Esophagus muscularis mucosa (tissue), 4 donors: ENCODE measurements at regions of chr5 and their contacts with region 1.

Region 1: GRCh38 chr5:75336625-75337339 is at the start of gene HMGCR:
- DNase-seq: peak; percentile 100
- H3K4me3 ChIP-seq: peak within 1 kb of the TSS; percentile 96 to 100 (median 96)
- H3K27ac ChIP-seq: peak within 1 kb of the TSS; percentile 91 to 97 (median 96)
- H3K4me1 ChIP-seq: peaks cover 13 to 23% (median 19%) of the 10 kb centered on the region in 4 donors
- H3K27me3 ChIP-seq: no peaks in the 10 kb centered on the region
- CTCF ChIP-seq: peak in 1 of 3 experiments; percentile 6
- EP300 ChIP-seq: no peak
- POLR2A ChIP-seq: no peak
- total RNA-seq, gene HMGCR: 9.6 to 17.4 (median 12.6) TPM

Region 2: GRCh38 chr5:75236322-75237316 is 100.2 kb before region 1 on chr5 and contains the start of gene ANKRD31:
- intact Hi-C with region 1: loop called (anchors 2 kb)
- DNase-seq: no peak
- H3K4me3 ChIP-seq: peak within 1 kb of the TSS; percentile 65 to 75 (median 68)
- H3K27ac ChIP-seq: peak within 1 kb of the TSS; percentile 64 to 81 (median 75)
- H3K4me1 ChIP-seq: peaks cover 3 to 16% (median 12%) of the 10 kb centered on the region in 4 donors
- H3K27me3 ChIP-seq: no peaks in the 10 kb centered on the region
- CTCF ChIP-seq: peak; percentile 94 to 97 (median 97)
- EP300 ChIP-seq: no peak
- POLR2A ChIP-seq: no peak
- total RNA-seq, gene ANKRD31: under 0.01 to 0.11 (median 0.03) TPM

Region 3: DNA sequence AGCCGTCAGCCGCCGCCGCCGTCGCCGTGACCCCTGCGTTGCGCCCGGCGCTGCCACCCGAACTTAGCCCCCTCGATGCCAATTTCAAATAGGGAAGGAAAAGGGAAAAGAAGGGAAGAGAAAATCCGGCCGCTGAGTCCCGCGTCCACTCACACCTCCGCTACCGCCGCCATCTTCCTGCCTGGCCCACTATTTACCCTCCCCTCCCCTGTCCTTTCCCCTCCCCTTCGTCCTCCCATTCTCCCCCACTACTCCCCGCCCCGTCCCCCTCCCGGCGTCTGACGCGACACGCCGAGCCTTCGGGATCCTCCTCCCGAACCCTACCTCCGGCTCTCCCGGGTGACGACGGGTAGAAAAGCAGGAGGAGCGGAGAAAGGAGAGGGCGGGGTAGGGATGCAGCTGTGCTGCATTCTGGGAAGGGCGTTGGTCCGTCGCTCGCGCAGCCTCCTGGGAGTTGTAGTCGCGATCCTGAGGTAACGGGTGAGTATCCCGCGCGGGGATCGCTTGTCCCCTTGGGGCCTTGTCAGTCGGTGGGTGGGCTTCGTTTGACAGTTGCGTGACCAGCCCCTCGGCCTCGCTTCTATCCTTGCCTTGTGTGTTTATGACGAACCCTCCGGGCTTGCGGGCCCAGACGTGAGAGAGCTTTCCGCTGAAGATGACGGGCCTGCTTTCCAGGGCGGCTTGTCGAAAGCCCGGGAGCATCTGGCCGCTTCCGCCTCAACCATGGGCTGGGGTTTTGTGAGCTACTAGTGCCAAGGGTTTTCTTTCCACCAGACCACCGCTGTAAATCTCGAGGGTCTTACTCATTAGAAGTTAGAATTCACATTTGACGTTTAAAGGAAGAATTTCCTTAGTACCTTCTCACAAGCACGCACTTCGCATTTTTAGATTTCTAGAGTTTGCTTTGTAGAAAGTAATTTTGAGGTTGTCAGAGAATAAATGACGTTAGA is 174.9 kb after region 1 on chr5 and contains the starts of genes CERT1 and POLK:
- intact Hi-C with region 1: loop called (anchors 2 kb)
- DNase-seq: peak; percentile 99
- H3K4me3 ChIP-seq: peak within 1 kb of the TSS; percentile 69 to 97 (median 90)
- H3K27ac ChIP-seq: peak within 1 kb of the TSS; percentile 89 to 97 (median 91)
- H3K4me1 ChIP-seq: peaks cover 24 to 55% (median 43%) of the 10 kb centered on the region in 4 donors
- H3K27me3 ChIP-seq: no peaks in the 10 kb centered on the region
- CTCF ChIP-seq: peak in 1 of 3 experiments; percentile 14
- EP300 ChIP-seq: no peak
- POLR2A ChIP-seq: peak; percentile 63
- total RNA-seq, gene CERT1: 28.5 to 45.3 (median 35.8) TPM
- total RNA-seq, gene POLK: 22.6 to 37.0 (median 32.3) TPM

Region 4: GRCh38 chr5:75681125-75681830 is 344.5 kb after region 1 on chr5:
- intact Hi-C with region 1: loop called (anchors 5 kb)
- DNase-seq: no peak
- H3K4me3 ChIP-seq: peak overlapping the region in 1 of 4 donors; percentile 3
- H3K27ac ChIP-seq: peak overlapping the region; percentile 14 to 64 (median 30)
- H3K4me1 ChIP-seq: peaks cover 0 to 20% (median 12%) of the 10 kb centered on the region in 4 donors
- H3K27me3 ChIP-seq: no peaks in the 10 kb centered on the region
- CTCF ChIP-seq: peak; percentile 72 to 93 (median 80)
- EP300 ChIP-seq: no peak
- POLR2A ChIP-seq: no peak